Left ventricle myocardium superior (tissue), 1 donor: ENCODE measurements at regions of chr14 and their contacts with region 1.

Region 1: GRCh38 chr14:74109369-74109768 is 24.6 kb downstream of the LIN52 start:
- DNase-seq: no peak
- ATAC-seq: no peak

Region 2: DNA sequence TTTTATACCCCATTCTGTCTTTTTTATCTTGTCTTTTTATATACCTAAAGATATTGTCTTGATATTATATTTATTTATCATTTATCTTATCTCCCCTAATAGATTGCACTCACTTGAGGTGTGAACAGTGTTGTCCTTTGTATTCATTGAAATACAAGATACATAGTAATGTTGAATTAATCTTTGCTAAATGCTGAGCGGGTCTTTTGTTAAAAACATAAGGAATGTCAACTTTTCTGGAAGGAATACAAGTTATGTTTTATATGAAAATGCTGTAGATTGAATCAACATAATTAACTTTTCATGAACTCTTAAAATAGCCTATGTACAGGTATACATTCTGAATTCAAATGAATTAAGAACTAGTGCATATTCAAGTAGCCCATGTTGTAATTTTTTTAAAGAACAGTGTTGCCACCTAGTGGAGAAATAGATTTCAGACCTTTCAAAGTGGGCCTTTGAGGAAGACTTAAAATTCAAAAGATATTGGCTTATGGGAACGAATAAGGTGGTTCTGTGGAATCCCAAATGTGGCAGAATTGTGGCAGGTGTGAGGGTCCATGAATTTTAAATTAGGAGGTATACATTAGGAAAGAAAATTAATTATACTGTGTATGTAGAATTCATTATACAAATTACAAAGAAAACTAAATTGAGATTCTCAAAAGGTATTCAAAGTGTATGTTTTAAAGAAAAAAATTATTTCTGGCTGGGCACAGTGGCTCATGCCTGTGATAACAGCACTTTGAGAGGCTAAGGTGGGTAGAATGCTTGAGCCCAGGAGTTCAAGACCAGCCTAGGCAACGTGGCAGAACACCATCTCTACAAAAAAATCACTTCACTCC is 71.1 kb before region 1 on chr14:
- intact Hi-C with region 1: no loop called
- DNase-seq: no peak
- ATAC-seq: no peak

Region 3: GRCh38 chr14:74249433-74250375 is 140.3 kb after region 1 on chr14:
- intact Hi-C with region 1: loop called (anchors 5 kb)
- DNase-seq: no peak
- ATAC-seq: no peak

Region 4: DNA sequence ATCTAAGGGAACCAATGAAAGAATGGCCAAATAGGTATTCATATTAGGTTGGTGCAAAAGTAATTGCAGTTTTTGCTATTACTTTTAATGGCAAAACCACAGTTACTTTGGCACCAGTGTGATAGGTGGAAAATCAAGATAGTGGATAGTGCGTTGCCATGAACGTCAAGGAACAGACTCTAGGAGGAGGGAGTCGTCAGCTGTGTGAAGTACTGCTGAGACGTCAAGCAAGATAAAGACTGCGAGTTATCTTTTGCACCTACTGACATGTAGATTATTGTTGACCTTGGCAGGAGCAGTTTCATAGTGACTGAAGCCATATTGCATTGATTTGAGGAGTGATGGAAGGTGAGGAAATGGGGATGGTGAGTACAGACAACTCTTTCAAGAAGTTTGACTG is 662.0 kb after region 1 on chr14:
- intact Hi-C with region 1: no loop called
- DNase-seq: no peak
- ATAC-seq: no peak